Dorsolateral prefrontal cortex (tissue), 120 donors: ENCODE measurements at regions of chr3 and their contacts with region 1.

Region 1: DNA sequence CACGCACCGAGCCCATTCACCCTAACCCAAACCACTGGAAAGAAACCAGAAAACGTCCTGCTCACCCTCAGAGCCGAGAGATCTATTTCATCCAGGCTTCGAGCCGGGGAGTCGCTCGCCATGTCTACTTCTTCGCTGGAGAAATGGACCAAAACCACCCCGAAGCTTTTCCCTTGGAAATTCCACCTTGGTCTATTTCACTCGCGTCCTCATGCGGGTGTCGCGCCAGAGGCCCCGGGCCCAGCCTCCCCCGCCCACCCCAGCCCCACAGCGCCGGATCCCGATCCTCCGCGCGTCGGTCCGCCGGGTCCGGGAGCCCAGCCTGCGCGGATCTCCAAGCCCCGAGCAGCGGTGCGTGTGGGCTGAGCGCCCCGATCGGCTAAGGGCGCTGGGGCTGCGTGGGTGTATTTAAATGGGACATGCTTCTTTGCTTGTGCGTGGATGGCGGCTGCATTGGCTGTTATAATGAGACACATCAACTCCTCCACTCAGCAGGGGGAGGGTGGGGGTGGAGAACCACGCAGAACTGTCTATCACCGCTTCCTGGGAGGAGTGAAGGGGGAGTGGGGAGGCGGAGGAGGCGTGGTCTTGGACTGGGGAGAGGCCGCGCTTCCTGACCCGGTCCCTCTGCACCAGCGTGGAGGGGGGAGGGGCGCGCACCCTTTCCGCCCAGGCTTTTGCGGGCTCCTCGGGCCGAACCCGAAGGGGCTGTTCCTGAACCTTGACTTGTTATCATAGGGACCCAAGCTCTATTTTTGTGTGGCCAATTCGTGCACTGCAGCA is at the start of gene TNIK:
- DNase-seq: peak; percentile 87 to 97 (median 96)
- H3K4me3 ChIP-seq: peak within 1 kb of the TSS; percentile 58 to 97 (median 84)
- H3K27ac ChIP-seq: peak within 1 kb of the TSS; percentile 32 to 94 (median 87)
- H3K27me3 ChIP-seq: no peaks in the 10 kb centered on the region
- CTCF ChIP-seq: peak in 4 of 56 donors; percentile 3 to 31 (median 13)
- total RNA-seq, gene TNIK: 63.1 to 191 (median 103) TPM

Region 2: GRCh38 chr3:171049861-171050444 is 410.2 kb before region 1 on chr3:
- intact Hi-C with region 1: loop called in 1 of 2 experiments (anchors 5 kb)
- DNase-seq: peak in 8 of 10 donors; percentile 18 to 62 (median 50)
- H3K4me3 ChIP-seq: no peak overlapping the region
- H3K27ac ChIP-seq: peak overlapping the region in 2 of 59 donors; percentile 6 to 18
- H3K27me3 ChIP-seq: no peaks in the 10 kb centered on the region
- CTCF ChIP-seq: peak in 55 of 56 donors; percentile 21 to 84 (median 66)

Region 3: DNA sequence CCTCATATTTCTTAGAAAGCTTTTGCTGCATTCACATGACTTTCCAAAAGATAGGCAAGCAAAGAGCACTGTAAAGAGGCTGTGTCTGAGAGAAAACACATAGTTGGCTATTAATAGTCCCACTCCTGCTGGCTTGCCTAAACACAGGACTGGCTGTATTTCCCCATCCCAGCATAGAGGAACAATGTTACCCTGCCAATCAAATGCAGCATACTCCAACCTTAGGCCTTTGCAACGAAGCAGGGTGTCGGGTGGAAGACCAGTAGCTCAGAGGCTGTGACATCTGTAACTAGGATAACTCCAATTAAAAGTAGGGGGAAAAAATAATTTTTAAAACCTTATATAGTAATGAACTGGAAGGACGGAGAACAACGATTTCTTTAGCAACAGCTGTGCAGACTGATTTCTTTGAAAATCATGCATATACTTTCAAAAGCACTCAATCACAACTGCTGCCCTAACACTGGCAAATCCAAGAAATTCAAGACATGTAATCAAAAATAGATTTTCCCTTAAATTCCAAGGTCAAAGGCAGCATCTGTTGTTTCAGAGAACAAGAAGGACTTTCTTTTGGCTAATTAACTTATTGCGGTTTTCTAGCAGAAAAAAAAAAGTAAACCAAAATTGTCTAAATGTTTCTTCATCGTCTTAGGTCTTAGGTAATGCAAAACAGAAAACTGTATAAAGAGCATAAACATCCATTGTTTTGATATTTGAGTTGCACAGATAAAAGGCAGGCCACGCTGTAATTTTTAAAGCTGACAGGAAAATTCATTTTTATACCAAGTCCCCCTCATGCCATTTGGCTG is 139.2 kb before region 1 on chr3:
- intact Hi-C with region 1: loop called in 1 of 2 experiments (anchors 2 kb)
- DNase-seq: no peak
- H3K4me3 ChIP-seq: peak overlapping the region in 25 of 59 donors; percentile 0 to 52 (median 16)
- H3K27ac ChIP-seq: peak overlapping the region in 52 of 59 donors; percentile 2 to 87 (median 56)
- H3K27me3 ChIP-seq: no peaks in the 10 kb centered on the region
- CTCF ChIP-seq: no peak

Region 4: GRCh38 chr3:171383206-171384018 is 76.7 kb before region 1 on chr3:
- intact Hi-C with region 1: loop called in 1 of 2 experiments (anchors 5 kb)
- DNase-seq: no peak
- H3K4me3 ChIP-seq: no peak overlapping the region
- H3K27ac ChIP-seq: peak overlapping the region in 42 of 59 donors; percentile 0 to 79 (median 44)
- H3K27me3 ChIP-seq: no peaks in the 10 kb centered on the region
- CTCF ChIP-seq: no peak

Region 5: DNA sequence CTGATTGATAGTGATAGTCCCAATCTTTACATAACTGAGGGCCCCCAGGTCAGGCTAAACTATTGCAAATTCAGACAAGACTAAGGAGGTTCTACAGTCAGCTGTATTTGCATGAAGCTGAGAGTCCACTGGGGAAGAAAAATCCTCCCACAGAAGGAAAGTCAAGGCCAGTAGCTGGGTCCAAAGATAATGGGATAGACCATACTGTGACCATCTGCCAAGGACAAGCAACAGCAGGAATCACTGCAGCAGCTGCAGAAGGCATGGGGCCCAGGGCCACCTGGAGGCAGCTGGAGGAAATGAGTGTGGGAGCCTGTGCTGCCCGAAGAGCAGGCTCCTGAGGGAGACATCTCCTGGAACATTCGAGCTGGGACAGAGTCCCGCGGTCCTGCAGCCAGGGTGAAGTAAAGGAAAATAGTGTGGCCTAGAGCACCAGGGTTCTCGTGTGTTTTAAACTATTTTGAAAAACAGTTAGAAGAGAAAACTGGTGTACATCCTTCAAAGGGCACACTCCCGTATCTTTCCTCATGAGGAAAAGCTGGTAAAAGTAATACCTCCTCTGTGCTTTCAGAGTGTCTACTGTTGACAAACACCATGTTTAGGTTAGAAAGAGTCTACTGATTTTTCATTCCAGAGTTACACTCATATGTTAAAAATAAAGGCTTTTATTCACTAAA is 369.8 kb after region 1 on chr3:
- intact Hi-C with region 1: loop called in 1 of 2 experiments (anchors 10 kb)
- DNase-seq: peak in 9 of 10 donors; percentile 54 to 75 (median 60)
- H3K4me3 ChIP-seq: peak overlapping the region in 1 of 59 donors; percentile 13
- H3K27ac ChIP-seq: peak overlapping the region in 57 of 59 donors; percentile 19 to 87 (median 73)
- H3K27me3 ChIP-seq: no peaks in the 10 kb centered on the region
- CTCF ChIP-seq: peak in 55 of 56 donors; percentile 15 to 85 (median 61)